ENCODE measurements at regions of chr1 and their contacts with region 1.

Region 1: GRCh38 chr1:220776720-220777326 is 9.9 kb upstream of the MTARC1 start:
- DNase-seq: peak; percentile 88
- H3K4me3 Mint-ChIP-seq: no peak overlapping the region
- H3K27ac Mint-ChIP-seq: no peak overlapping the region
- H3K4me1 Mint-ChIP-seq: no peaks in the 10 kb centered on the region
- H3K27me3 Mint-ChIP-seq: no peaks in the 10 kb centered on the region
- CTCF ChIP-seq: peak; percentile 99

Region 2: GRCh38 chr1:219837274-219837993 is 939.4 kb before region 1 on chr1:
- CTCF ChIA-PET with region 1: no interaction called
- POLR2A ChIA-PET with region 1: no interaction called
- intact Hi-C with region 1: loop called (anchors 1 kb)
- DNase-seq: peak; percentile 85
- H3K4me3 Mint-ChIP-seq: no peak overlapping the region
- H3K27ac Mint-ChIP-seq: no peak overlapping the region
- H3K4me1 Mint-ChIP-seq: no peaks in the 10 kb centered on the region
- H3K27me3 Mint-ChIP-seq: peaks cover 95% of the 10 kb centered on the region
- CTCF ChIP-seq: peak; percentile 85

Region 3: GRCh38 chr1:220207411-220207810 is 569.4 kb before region 1 on chr1:
- CTCF ChIA-PET with region 1: interaction called, 10 read pairs
- POLR2A ChIA-PET with region 1: no interaction called
- intact Hi-C with region 1: no loop called
- DNase-seq: no peak
- H3K4me3 Mint-ChIP-seq: no peak overlapping the region
- H3K27ac Mint-ChIP-seq: no peak overlapping the region
- H3K4me1 Mint-ChIP-seq: no peaks in the 10 kb centered on the region
- H3K27me3 Mint-ChIP-seq: no peaks in the 10 kb centered on the region
- CTCF ChIP-seq: no peak

Region 4: DNA sequence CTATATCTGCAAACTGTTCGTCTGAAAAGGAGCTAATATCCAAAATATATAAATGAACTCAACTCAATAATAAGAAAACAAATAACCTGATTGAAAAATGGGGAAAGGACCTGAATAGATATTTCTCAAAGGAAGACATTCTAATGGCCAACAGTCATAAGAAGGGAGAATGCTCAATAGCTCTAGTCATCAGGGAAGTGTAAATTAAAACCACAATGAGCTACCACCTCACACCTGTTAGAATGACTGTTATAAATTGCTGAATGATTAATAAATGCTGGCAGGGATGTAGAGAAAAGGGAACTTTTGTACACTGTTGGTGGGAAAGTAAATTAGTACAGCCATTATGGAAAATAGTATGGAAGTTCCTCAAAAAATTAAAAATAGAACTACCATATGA is 107.8 kb before region 1 on chr1:
- CTCF ChIA-PET with region 1: interaction called, 14 read pairs
- POLR2A ChIA-PET with region 1: no interaction called
- intact Hi-C with region 1: no loop called
- DNase-seq: no peak
- H3K4me3 Mint-ChIP-seq: no peak overlapping the region
- H3K27ac Mint-ChIP-seq: no peak overlapping the region
- H3K4me1 Mint-ChIP-seq: no peaks in the 10 kb centered on the region
- H3K27me3 Mint-ChIP-seq: no peaks in the 10 kb centered on the region
- CTCF ChIP-seq: no peak

Region 5: GRCh38 chr1:220726634-220727033 is 50.2 kb before region 1 on chr1:
- CTCF ChIA-PET with region 1: interaction called, 18 read pairs
- POLR2A ChIA-PET with region 1: no interaction called
- intact Hi-C with region 1: no loop called
- DNase-seq: no peak
- H3K4me3 Mint-ChIP-seq: no peak overlapping the region
- H3K27ac Mint-ChIP-seq: no peak overlapping the region
- H3K4me1 Mint-ChIP-seq: peaks cover 2% of the 10 kb centered on the region
- H3K27me3 Mint-ChIP-seq: no peaks in the 10 kb centered on the region
- CTCF ChIP-seq: peak; percentile 49

Region 6: DNA sequence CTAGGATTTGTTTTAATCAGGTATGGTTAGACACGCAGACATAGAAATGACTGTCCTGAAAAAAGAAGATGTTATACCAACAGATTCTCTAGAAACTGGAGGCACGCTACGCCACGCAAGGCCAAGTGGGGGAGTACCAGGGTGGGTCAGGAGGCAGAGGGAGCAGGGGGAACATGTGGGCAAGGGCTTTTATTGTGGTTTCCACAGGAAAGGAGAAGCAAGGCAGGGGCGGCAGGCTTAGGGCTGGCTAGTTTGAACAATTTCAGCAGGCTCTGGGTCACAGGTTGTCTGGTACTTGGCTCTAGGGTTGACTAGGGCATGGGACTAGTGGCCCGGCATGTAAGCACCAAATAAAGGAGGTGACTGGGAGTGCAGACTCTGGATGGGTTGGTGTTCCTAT is 21.5 kb before region 1 on chr1:
- CTCF ChIA-PET with region 1: interaction called, 118 read pairs
- POLR2A ChIA-PET with region 1: interaction called, 4 read pairs
- intact Hi-C with region 1: no loop called
- DNase-seq: no peak
- H3K4me3 Mint-ChIP-seq: no peak overlapping the region
- H3K27ac Mint-ChIP-seq: no peak overlapping the region
- H3K4me1 Mint-ChIP-seq: no peaks in the 10 kb centered on the region
- H3K27me3 Mint-ChIP-seq: peaks cover 6% of the 10 kb centered on the region
- CTCF ChIP-seq: no peak

Region 7: GRCh38 chr1:221230605-221231004 is 453.8 kb after region 1 on chr1:
- CTCF ChIA-PET with region 1: no interaction called
- POLR2A ChIA-PET with region 1: no interaction called
- intact Hi-C with region 1: no loop called
- DNase-seq: peak; percentile 38
- H3K4me3 Mint-ChIP-seq: no peak overlapping the region
- H3K27ac Mint-ChIP-seq: no peak overlapping the region
- H3K4me1 Mint-ChIP-seq: no peaks in the 10 kb centered on the region
- H3K27me3 Mint-ChIP-seq: no peaks in the 10 kb centered on the region
- CTCF ChIP-seq: no peak

Measured in MCF 10A (cell line).